ENCODE measurements at regions of chr17 and their contacts with region 1.

Region 1: DNA sequence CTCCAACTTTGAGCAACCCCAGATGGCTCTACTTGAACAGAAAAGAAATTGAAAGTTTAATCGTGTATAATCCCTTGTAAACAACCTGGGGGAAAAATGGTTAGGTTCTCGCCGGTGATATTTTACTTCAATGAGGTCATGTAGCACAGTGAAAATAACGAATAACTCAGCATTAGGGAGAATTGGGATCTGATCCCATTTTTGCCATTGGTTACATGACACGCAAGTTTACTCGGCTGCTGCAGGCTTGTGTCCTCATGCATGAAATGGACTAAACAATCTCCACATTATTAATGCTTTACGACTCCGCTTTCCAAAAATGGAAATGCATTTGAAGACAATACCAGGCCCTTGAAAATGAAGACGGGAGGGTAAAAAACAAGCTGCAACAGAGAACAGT is 45.5 kb upstream of the LRRC37A3 start:
- DNase-seq: no peak
- H3K4me3 ChIP-seq: no peak overlapping the region
- H3K27ac ChIP-seq: no peak overlapping the region
- H3K4me1 ChIP-seq: peaks cover 4 to 27% of the 10 kb centered on the region in 2 donors
- H3K27me3 ChIP-seq: no peaks in the 10 kb centered on the region
- CTCF ChIP-seq: no peak
- POLR2A ChIP-seq: no peak

Region 2: GRCh38 chr17:64580384-64581315 is 384.1 kb before region 1 on chr17:
- intact Hi-C with region 1: no loop called
- DNase-seq: no peak
- H3K4me3 ChIP-seq: no peak overlapping the region
- H3K27ac ChIP-seq: no peak overlapping the region
- H3K4me1 ChIP-seq: peaks cover 0 to 31% of the 10 kb centered on the region in 2 donors
- H3K27me3 ChIP-seq: no peaks in the 10 kb centered on the region
- CTCF ChIP-seq: no peak
- POLR2A ChIP-seq: no peak

Region 3: GRCh38 chr17:64920026-64920418 is 44.8 kb before region 1 on chr17:
- intact Hi-C with region 1: loop called in 1 of 2 experiments (anchors 5 kb)
- DNase-seq: peak in 5 of 7 donors; percentile 21 to 47 (median 36)
- H3K4me3 ChIP-seq: peak overlapping the region in 2 of 4 donors; percentile 60 to 86
- H3K27ac ChIP-seq: peak overlapping the region; percentile 57 to 95 (median 94)
- H3K4me1 ChIP-seq: peaks cover 0 to 4% of the 10 kb centered on the region in 2 donors
- H3K27me3 ChIP-seq: no peaks in the 10 kb centered on the region
- CTCF ChIP-seq: peak in 1 of 6 experiments; percentile 9
- POLR2A ChIP-seq: no peak

Region 4: GRCh38 chr17:65191811-65192740 is 227.3 kb after region 1 on chr17:
- intact Hi-C with region 1: no loop called
- DNase-seq: peak; percentile 53 to 87 (median 81)
- H3K4me3 ChIP-seq: no peak overlapping the region
- H3K27ac ChIP-seq: peak overlapping the region in 2 of 5 donors; percentile 61
- H3K4me1 ChIP-seq: peaks cover 6 to 10% of the 10 kb centered on the region in 2 donors
- H3K27me3 ChIP-seq: no peaks in the 10 kb centered on the region
- CTCF ChIP-seq: no peak
- POLR2A ChIP-seq: no peak